CD8-positive, alpha-beta T cell (primary cell): ENCODE measurements at regions of chr18 and their contacts with region 1.

Region 1: GRCh38 chr18:74390900-74391299 is 66.2 kb downstream of the DIPK1C start:
- DNase-seq: no peak
- ATAC-seq: no peak
- H3K4me3 ChIP-seq: no peak overlapping the region
- H3K4me3 Mint-ChIP-seq: no peak overlapping the region
- H3K27ac ChIP-seq: no peak overlapping the region
- H3K27ac Mint-ChIP-seq: no peak overlapping the region
- H3K4me1 ChIP-seq: peaks cover 16% of the 10 kb centered on the region
- H3K4me1 Mint-ChIP-seq: peaks cover 13% of the 10 kb centered on the region
- H3K27me3 ChIP-seq: no peaks in the 10 kb centered on the region
- H3K27me3 Mint-ChIP-seq: peaks cover 6% of the 10 kb centered on the region
- CTCF ChIP-seq: no peak

Region 2: DNA sequence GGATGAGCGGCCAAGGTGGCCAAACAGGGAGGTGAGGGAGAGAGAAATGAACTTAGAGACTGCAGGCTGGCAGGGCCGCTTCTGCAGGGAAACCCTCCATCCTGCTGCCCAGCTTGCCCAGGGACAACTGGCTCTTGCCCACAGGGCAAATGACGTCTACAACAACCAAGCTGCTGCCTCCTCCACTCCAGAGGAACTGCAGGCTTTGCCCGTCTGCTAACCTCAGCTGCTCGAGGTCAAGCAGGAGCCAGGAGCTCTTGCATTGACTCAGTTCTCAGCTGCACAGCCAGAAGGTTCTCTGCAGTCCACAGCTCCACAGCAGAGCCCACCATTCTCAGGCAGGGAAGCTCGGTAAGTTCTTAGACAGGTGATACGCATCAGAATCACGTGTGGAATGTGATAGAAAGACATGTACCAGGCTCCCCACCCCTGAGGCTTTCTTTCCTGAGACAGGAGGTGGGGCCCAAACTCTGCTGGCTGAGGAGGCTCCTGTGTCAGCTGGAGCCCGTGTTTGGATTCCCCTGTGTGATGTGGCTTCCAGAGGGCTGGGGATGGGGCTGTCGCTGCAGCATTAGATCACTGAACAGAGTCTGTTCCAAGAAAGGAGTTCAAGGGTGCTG is 38.1 kb after region 1 on chr18:
- CTCF ChIA-PET with region 1: no interaction called
- POLR2A ChIA-PET with region 1: no interaction called
- intact Hi-C with region 1: loop called in 1 of 2 experiments (anchors 5 kb)
- DNase-seq: no peak
- ATAC-seq: no peak
- H3K4me3 ChIP-seq: no peak overlapping the region
- H3K4me3 Mint-ChIP-seq: no peak overlapping the region
- H3K27ac ChIP-seq: no peak overlapping the region
- H3K27ac Mint-ChIP-seq: no peak overlapping the region
- H3K4me1 ChIP-seq: no peaks in the 10 kb centered on the region
- H3K4me1 Mint-ChIP-seq: no peaks in the 10 kb centered on the region
- H3K27me3 ChIP-seq: no peaks in the 10 kb centered on the region
- H3K27me3 Mint-ChIP-seq: no peaks in the 10 kb centered on the region
- CTCF ChIP-seq: no peak

Region 3: GRCh38 chr18:74623047-74623816 is 232.3 kb after region 1 on chr18:
- CTCF ChIA-PET with region 1: no interaction called
- POLR2A ChIA-PET with region 1: no interaction called
- intact Hi-C with region 1: no loop called
- DNase-seq: peak in 5 of 9 experiments; percentile 21 to 51 (median 39)
- ATAC-seq: no peak
- H3K4me3 ChIP-seq: no peak overlapping the region
- H3K4me3 Mint-ChIP-seq: no peak overlapping the region
- H3K27ac ChIP-seq: no peak overlapping the region
- H3K27ac Mint-ChIP-seq: no peak overlapping the region
- H3K4me1 ChIP-seq: peaks cover 12% of the 10 kb centered on the region
- H3K4me1 Mint-ChIP-seq: peaks cover 2% of the 10 kb centered on the region
- H3K27me3 ChIP-seq: no peaks in the 10 kb centered on the region
- H3K27me3 Mint-ChIP-seq: no peaks in the 10 kb centered on the region
- CTCF ChIP-seq: peak; percentile 75